Panc1 (cell line): ENCODE measurements at regions of chr1 and their contacts with region 1.

Region 1: DNA sequence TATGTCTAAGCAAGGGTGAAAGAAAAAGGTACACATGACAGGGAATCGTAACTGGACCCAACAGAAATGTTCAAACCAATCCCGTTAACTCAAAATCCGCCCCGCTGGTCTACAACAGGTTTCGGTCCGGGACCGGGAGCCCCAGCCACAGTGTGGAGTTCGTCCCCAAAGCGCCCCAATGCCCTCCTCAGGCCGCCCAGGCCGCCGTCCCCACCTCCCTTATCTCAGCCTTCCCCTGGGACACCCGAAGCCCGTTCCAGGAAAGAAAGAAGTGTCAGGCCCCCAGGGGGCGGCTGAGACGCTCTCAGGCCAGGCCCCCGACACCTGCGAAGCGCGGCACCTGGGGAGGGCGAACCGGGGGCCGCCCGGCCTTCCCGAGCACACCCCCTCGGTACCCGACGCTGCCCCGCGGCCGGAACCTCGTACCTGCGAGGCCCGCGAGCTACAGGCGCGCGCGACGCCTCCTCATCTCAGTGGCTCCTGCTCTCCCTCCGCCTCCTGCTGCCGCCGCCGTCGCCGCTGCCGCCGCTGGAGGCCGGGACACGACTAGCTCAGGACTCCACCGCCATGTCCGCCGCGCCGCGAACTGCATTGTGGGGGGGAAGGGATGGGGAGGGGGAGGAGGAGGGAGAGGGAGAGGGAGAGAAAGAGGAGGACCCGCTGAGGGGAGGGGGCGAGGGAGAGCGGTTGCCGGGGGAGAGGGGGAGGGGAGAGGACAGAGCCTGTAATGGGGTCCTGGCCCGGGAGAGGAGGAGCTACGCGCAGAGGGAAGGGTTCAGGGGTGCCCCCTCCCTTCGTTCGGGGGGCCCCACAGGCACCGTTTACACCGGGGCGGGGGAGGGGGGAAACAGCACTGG is at the start of gene TUT4:
- DNase-seq: no peak
- ATAC-seq: peak; percentile 81
- H3K4me3 ChIP-seq: peak within 1 kb of the TSS; percentile 81 to 96
- H3K27ac ChIP-seq: peak within 1 kb of the TSS; percentile 93
- H3K4me1 ChIP-seq: peaks cover 26% of the 10 kb centered on the region
- H3K27me3 ChIP-seq: no peaks in the 10 kb centered on the region
- CTCF ChIP-seq: no peak
- total RNA-seq, gene TUT4: 67.4 TPM

Region 2: DNA sequence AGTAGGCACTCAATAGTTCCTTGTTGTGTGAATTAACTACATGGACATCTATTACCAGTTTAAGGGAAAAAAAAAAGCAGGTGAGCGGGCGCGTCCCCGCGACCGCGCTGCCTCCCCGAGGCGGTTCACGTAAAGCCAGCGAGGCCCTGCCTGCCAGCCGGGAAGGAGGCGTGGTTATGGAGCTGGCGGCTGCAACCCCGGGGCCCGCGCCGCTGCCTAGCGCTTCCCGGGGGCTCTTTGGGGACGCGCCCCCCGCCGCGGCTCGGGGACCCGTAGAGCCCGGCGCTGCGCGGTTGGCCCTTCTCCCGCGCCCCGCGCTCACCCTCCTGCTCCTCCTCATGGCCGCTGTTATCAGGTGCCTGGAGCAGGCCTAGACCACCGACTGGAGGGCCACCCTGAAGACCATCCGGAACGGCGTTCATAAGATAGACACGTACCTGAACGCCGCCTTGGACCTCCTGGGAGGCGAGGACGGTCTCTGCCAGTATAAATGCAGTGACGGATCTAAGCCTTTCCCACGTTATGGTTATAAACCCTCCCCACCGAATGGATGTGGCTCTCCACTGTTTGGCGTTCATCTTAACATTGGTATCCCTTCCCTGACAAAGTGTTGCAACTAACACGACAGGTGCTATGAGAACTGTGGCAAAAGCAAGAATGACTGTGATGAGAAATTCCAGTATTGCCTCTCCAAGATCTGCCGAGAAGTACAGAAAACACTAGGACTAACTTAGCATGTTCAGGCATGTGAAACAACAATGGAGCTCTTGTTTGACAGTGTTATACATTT is 184.2 kb before region 1 on chr1:
- CTCF ChIA-PET with region 1: no interaction called
- POLR2A ChIA-PET with region 1: interaction called, 11 read pairs
- in situ Hi-C with region 1: no loop called
- intact Hi-C with region 1: no loop called
- DNase-seq: no peak
- ATAC-seq: peak; percentile 41
- H3K4me3 ChIP-seq: peak overlapping the region; percentile 51 to 57
- H3K27ac ChIP-seq: peak overlapping the region; percentile 17
- H3K4me1 ChIP-seq: peaks cover 18% of the 10 kb centered on the region
- H3K27me3 ChIP-seq: no peaks in the 10 kb centered on the region
- CTCF ChIP-seq: no peak; the same call in 1 of the 2 replicates

Region 3: GRCh38 chr1:52604063-52604770 is 51.5 kb after region 1 on chr1:
- CTCF ChIA-PET with region 1: interaction called, 12 read pairs
- POLR2A ChIA-PET with region 1: interaction called, 3 read pairs
- in situ Hi-C with region 1: no loop called
- intact Hi-C with region 1: no loop called
- DNase-seq: no peak
- ATAC-seq: no peak
- H3K4me3 ChIP-seq: no peak overlapping the region
- H3K27ac ChIP-seq: no peak overlapping the region
- H3K4me1 ChIP-seq: peaks cover 9% of the 10 kb centered on the region; the same call in 1 of the 2 replicates
- H3K27me3 ChIP-seq: no peaks in the 10 kb centered on the region
- CTCF ChIP-seq: no peak

Region 4: GRCh38 chr1:52662645-52663313 is 110.0 kb after region 1 on chr1:
- CTCF ChIA-PET with region 1: interaction called, 10 read pairs
- POLR2A ChIA-PET with region 1: interaction called, 12 read pairs
- in situ Hi-C with region 1: no loop called
- intact Hi-C with region 1: no loop called
- DNase-seq: no peak
- ATAC-seq: peak; percentile 87
- H3K4me3 ChIP-seq: peak overlapping the region; percentile 5 to 38; a peak in 3 of 4 replicates
- H3K27ac ChIP-seq: peak overlapping the region; percentile 64
- H3K4me1 ChIP-seq: peaks cover 17% of the 10 kb centered on the region; the same call in 1 of the 2 replicates
- H3K27me3 ChIP-seq: no peaks in the 10 kb centered on the region
- CTCF ChIP-seq: no peak; the same call in 1 of the 2 replicates

Region 5: GRCh38 chr1:52669696-52670095 is 117.0 kb after region 1 on chr1:
- CTCF ChIA-PET with region 1: interaction called, 10 read pairs
- POLR2A ChIA-PET with region 1: no interaction called
- in situ Hi-C with region 1: no loop called
- intact Hi-C with region 1: no loop called
- DNase-seq: no peak
- ATAC-seq: no peak
- H3K4me3 ChIP-seq: no peak overlapping the region
- H3K27ac ChIP-seq: no peak overlapping the region
- H3K4me1 ChIP-seq: peaks cover 3% of the 10 kb centered on the region; the same call in 1 of the 2 replicates
- H3K27me3 ChIP-seq: no peaks in the 10 kb centered on the region
- CTCF ChIP-seq: no peak